Prostate gland (tissue), 2 donors: ENCODE measurements at regions of chr15 and their contacts with region 1.

Region 1: GRCh38 chr15:70636540-70637165 is 126.7 kb downstream of the UACA start:
- DNase-seq: no peak
- H3K4me3 ChIP-seq: no peak overlapping the region
- H3K27ac ChIP-seq: no peak overlapping the region
- H3K4me1 ChIP-seq: peaks cover 8% of the 10 kb centered on the region
- H3K27me3 ChIP-seq: no peaks in the 10 kb centered on the region
- CTCF ChIP-seq: peak in 3 of 4 experiments; percentile 23 to 43 (median 28)
- POLR2A ChIP-seq: no peak

Region 2: DNA sequence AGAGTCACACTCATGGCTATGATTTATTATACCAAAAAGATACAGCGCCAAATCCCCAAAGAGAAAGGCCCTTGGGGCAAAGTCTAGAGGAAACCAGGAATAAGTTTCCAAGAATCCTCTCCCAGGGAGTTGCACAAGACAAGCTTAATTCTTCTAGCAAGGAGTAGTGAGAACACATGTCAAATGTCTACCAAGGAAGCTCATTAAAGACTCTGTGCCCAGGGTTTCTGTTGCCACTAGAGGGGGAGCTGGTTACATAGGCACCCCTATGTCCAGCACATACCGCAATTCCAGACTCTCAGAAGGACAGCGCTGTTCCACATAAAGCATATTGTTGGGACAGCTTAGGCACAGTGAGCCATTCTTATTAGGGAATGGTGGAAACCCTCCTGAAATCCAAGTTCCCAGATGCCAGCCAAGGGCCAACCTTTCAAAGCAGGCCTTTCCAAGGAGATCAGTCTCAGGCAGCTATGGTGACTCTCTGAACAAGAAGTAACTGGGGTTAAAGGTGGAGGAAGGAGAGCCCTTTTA is 67.5 kb before region 1 on chr15:
- intact Hi-C with region 1: loop called (anchors 5 kb)
- DNase-seq: peak; percentile 28
- H3K4me3 ChIP-seq: no peak overlapping the region
- H3K27ac ChIP-seq: no peak overlapping the region
- H3K4me1 ChIP-seq: no peaks in the 10 kb centered on the region
- H3K27me3 ChIP-seq: no peaks in the 10 kb centered on the region
- CTCF ChIP-seq: peak; percentile 10 to 56 (median 48)
- POLR2A ChIP-seq: no peak